ENCODE measurements at regions of chr17 and their contacts with region 1.

Region 1: GRCh38 chr17:59786536-59787319 is 79.3 kb downstream of the VMP1 start:
- DNase-seq: peak; percentile 90
- H3K4me3 Mint-ChIP-seq: peak overlapping the region; percentile 60
- H3K27ac Mint-ChIP-seq: peak overlapping the region; percentile 90
- H3K4me1 Mint-ChIP-seq: peaks cover 57% of the 10 kb centered on the region
- H3K27me3 Mint-ChIP-seq: peaks cover 2% of the 10 kb centered on the region

Region 2: DNA sequence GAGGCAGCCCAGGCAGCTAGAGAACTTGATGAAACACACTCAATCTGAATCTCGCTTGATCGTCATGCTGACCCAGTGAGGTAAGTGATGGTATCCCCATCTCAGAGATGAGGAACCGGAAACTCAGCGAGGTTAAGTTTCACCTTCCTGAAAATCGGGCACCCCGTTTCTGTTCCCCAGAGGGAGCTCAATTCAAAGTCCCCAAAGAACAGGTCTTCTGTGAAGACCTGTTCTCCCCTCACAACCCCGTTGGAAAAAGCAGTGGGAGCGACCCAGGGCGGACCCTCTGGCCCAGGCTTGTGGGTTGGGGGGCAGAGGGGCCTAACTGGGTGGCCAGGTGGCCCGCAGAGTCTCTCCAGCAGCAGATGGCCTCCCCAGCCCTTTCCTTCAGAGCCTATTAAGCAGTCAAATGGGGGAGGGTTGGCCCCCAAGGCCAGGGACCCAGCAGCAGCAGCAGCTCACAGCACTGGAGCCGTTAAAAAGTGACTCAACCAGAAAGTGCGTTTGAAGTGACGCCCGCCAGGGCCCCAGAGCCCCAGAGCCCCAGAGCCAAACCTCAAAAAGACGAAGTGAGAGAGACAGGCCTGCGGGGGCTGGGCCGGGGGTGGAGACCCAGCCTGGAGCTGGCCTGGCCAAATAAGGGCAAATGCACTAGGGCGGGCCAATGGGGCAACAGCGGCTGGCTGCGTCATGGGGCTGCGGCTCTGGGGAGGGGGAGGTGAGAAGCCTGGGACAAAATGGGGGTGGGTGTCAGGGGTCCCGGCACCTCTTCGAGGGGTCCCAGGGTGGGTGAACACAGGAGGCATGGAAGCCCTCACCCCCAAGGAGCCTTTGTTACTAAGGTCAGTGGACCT is 1448.9 kb before region 1 on chr17:
- intact Hi-C with region 1: loop called (anchors 2 kb)
- DNase-seq: peak; percentile 92
- H3K4me3 Mint-ChIP-seq: peak overlapping the region; percentile 100
- H3K27ac Mint-ChIP-seq: peak overlapping the region; percentile 99
- H3K4me1 Mint-ChIP-seq: peaks cover 61% of the 10 kb centered on the region
- H3K27me3 Mint-ChIP-seq: peaks cover 2% of the 10 kb centered on the region

Region 3: DNA sequence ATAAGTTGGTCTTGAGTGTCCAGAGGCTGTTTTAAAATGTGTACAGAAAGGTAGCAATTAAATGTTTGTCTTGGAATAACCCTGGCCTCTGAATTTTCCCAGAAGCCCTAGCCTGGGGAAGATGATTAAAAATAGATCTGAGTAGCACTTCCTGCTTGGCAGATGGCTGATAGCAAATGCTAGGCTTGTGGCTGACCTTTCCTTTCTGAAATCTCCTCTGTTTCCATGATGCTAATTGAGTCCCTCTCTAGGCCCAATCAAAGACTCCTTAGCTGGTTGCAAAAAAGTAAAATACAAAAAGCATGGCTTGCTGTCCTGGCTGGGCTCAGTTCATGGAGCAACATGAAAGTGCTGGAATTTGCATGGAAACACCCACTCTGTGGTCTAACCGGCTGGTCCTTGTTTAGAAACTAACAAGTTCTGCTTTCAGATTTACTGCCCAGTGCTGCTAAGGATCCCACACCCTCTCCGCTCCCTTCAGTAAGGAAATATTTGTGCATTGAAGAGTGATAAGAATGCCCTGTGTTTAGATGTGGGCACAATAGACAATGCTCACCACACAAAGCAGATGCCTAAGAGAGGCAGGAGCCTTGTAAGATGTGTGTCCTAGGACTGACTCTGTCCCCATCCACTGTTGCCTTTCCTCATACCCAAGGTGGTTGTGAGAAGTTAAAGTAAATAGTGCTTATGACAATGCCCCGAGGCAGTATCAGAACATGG is 414.4 kb before region 1 on chr17:
- intact Hi-C with region 1: no loop called
- DNase-seq: no peak
- H3K4me3 Mint-ChIP-seq: no peak overlapping the region
- H3K27ac Mint-ChIP-seq: peak overlapping the region; percentile 61
- H3K4me1 Mint-ChIP-seq: peaks cover 70% of the 10 kb centered on the region
- H3K27me3 Mint-ChIP-seq: no peaks in the 10 kb centered on the region

Region 4: DNA sequence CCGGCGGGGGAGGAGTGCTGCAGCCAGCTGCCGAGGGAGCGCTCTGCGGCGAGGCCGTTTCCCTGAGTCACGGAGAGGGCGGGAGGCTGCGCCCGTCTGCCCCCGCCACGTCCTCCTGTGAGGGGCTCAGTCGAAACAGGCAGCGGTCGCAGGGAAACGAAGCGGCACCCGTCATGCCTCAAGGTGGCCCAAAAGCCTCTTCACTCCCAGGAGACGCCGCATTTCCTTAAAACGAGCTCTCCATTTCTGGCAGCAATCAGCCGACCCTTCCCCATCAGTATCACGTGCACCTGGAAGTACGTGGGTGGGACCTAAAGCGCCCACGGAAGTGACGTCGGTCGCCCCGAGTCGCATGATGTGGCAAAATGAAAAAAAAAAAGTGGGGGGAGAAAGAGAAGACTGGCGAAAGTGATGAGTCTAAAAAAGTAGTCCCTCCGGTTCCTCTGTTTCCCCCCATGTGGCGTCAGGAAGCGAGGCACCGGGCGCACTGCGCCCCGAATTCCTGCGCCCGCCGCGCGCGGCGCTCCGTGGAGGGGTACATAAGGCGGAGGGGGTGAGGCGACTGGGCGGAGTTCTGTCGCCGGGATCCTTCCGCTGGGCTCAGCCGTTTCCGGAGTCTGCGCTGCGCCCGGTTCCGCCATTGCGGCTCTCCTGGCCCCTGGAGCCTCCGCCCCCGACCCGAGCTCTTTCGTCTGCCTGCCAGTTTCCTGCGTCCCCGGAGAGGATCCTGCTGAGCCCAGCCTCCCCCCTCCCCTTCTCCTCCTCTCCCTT is 167.2 kb before region 1 on chr17 and contains the start of gene CLTC:
- intact Hi-C with region 1: loop called (anchors 1 kb)
- DNase-seq: peak; percentile 90
- H3K4me3 Mint-ChIP-seq: peak within 1 kb of the TSS; percentile 97
- H3K27ac Mint-ChIP-seq: peak within 1 kb of the TSS; percentile 100
- H3K4me1 Mint-ChIP-seq: peaks cover 57% of the 10 kb centered on the region
- H3K27me3 Mint-ChIP-seq: no peaks in the 10 kb centered on the region
- total RNA-seq, gene CLTC: 176 and 186 TPM in 2 replicates

Region 5: GRCh38 chr17:59725691-59726090 is 61.0 kb before region 1 on chr17:
- intact Hi-C with region 1: no loop called
- DNase-seq: no peak
- H3K4me3 Mint-ChIP-seq: no peak overlapping the region
- H3K27ac Mint-ChIP-seq: no peak overlapping the region
- H3K4me1 Mint-ChIP-seq: peaks cover 5% of the 10 kb centered on the region
- H3K27me3 Mint-ChIP-seq: no peaks in the 10 kb centered on the region

Region 6: GRCh38 chr17:59762513-59763374 is 24.0 kb before region 1 on chr17:
- intact Hi-C with region 1: loop called (anchors 1 kb)
- DNase-seq: no peak
- H3K4me3 Mint-ChIP-seq: peak overlapping the region; percentile 64
- H3K27ac Mint-ChIP-seq: peak overlapping the region; percentile 96
- H3K4me1 Mint-ChIP-seq: peaks cover 58% of the 10 kb centered on the region
- H3K27me3 Mint-ChIP-seq: no peaks in the 10 kb centered on the region

Region 7: DNA sequence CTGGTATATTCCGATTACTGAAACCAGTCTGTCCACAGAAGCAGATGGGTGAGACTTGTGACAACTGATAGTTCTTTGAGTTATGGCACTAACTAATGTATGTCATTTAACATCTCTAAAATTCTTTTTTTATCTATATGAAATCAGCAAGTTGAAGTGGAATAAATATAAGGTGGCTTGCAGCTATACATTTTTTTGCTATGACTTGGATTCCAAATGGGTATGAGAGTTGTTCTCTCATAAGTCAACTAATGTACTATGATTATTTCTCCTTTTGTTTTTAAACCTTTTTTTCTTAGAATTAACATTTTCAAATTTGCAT is 10.1 kb before region 1 on chr17:
- intact Hi-C with region 1: no loop called
- DNase-seq: no peak
- H3K4me3 Mint-ChIP-seq: no peak overlapping the region
- H3K27ac Mint-ChIP-seq: peak overlapping the region; percentile 59
- H3K4me1 Mint-ChIP-seq: peaks cover 39% of the 10 kb centered on the region
- H3K27me3 Mint-ChIP-seq: no peaks in the 10 kb centered on the region

Region 8: DNA sequence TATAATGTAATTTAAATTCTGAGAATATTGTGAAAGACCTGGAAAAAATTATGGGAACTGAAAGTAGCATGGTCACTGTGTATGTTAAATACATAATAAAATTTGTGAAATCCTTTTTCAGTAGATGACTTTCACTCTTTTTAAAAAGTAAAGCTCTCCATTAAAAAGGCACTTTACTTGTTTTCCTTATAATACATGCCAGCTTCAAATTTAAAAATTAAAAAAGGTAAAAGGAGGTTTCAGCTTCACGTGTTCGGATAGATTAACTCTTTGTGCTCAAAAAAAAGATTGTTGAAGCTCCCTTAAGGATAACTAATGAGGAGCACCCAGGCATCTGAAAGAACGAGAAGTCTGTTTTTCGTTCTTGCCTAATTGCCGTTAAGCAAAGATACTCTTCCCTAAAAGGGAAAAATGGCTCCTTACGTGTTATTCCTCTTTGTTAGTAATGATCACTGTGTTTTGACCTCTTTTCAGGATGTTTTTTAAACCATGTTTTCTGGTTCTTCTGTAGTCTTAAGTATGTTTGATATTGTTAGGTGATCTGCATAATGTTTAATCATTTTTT is 18.3 kb after region 1 on chr17:
- intact Hi-C with region 1: no loop called
- DNase-seq: no peak
- H3K4me3 Mint-ChIP-seq: no peak overlapping the region
- H3K27ac Mint-ChIP-seq: no peak overlapping the region
- H3K4me1 Mint-ChIP-seq: peaks cover 27% of the 10 kb centered on the region
- H3K27me3 Mint-ChIP-seq: no peaks in the 10 kb centered on the region

Region 9: DNA sequence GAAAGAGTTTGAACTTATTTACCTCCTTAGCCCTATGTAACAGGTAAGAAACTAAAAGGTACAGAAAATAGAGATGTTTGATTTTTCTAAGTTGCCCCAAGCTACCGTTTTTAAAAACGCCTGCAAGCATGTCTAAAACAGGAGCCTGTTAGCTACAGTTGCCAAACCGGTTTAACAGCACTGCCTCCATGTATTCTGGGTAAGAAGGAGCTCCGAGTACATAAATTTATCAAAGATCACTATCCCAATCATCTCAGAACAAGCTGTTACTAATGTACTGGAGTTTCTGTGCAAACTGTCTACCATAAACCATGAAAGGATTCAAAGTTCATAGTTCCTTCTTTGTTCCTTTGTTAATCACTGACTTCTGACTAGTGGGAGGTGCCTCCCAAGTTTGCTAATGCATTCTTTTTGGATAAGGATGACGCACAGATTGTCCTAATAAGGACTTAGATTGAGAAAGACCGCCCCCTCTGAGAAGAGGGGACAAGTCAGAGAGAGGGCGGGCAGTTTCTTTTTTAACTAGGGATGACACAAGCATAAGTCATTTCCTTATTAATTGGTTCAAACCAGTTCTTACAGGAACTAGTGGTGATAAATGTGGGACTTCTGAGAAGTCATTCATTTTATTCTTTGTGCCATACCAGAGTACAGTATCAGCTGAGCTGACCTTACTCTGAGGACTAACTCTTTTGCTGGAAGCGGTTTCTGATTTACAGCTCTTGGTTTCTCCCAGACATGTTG is 50.8 kb after region 1 on chr17:
- intact Hi-C with region 1: loop called (anchors 1 kb)
- DNase-seq: peak; percentile 81
- H3K4me3 Mint-ChIP-seq: peak overlapping the region; percentile 96
- H3K27ac Mint-ChIP-seq: peak overlapping the region; percentile 99
- H3K4me1 Mint-ChIP-seq: peaks cover 27% of the 10 kb centered on the region
- H3K27me3 Mint-ChIP-seq: peaks cover 2% of the 10 kb centered on the region

Region 10: DNA sequence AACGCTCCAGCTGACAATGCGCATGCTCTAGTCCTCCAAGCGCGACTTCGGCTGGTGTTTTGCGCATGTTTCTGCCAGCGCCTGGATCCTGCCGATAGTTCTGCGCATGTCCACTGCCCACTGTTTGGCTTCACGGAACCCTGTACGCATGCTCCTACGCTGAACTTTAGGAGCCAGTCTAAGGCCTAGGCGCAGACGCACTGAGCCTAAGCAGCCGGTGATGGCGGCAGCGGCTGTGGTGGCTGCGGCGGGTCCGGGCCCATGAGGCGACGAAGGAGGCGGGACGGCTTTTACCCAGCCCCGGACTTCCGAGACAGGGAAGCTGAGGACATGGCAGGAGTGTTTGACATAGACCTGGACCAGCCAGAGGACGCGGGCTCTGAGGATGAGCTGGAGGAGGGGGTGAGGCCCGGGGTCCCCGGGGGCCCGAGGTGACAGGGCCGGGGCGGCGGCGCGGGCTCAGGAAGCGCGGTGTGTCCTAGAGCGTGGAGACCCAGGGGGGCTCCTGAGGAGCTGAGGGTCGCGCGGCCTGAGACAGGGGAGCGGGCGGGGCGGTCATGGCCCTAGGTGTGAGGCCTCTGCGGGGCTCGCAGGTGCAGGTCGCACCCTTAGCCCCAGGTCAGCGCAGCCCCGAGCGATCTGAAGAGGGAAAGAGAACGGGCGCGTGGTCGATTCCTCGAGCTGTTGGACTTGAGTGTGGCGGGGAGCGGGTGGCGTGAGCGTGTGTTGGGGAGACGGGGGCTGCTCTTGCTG is 106.4 kb after region 1 on chr17 and contains the starts of genes RPS6KB1 and TUBD1:
- intact Hi-C with region 1: loop called (anchors 1 kb)
- DNase-seq: peak; percentile 98
- H3K4me3 Mint-ChIP-seq: peak within 1 kb of the TSS; percentile 100
- H3K27ac Mint-ChIP-seq: peak within 1 kb of the TSS; percentile 99
- H3K4me1 Mint-ChIP-seq: peaks cover 58% of the 10 kb centered on the region
- H3K27me3 Mint-ChIP-seq: peaks cover 3% of the 10 kb centered on the region
- total RNA-seq, gene RPS6KB1: 67.6 and 82.7 TPM in 2 replicates
- total RNA-seq, gene TUBD1: 12.3 and 13.2 TPM in 2 replicates